AG04449 (cell line): ENCODE measurements at regions of chr7 and their contacts with region 1.

Region 1: DNA sequence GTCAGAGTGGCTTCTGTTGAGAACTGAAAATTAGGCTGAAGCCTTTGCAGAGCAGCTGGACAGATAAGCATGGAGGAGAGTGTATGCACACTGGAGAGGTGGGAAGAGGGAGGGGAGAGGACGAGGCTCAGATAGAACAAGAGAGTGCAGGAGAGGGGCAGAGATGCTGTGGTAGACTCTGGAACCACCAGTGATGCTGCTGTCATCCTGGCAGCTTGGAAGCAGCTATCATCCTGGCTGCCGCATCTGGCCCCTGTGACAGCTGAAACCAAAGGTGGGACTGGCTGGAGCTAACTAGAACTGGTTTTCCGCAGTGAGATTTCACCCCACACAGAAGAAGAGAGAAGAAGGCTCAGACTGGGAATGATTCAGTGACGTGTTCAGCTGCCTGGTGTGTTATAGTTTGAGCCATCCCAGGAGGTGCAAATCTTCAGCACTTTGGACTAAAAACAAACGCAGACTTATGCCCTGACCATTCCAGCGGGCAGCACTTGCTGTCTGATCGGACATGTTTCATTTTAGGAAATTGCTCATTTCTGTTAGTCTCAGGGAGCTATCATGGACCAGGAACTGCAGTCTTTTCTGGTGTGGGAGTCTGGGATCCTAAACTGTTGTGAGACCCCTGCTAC is 38.4 kb downstream of the EEPD1 start:
- DNase-seq: no peak
- H3K4me3 ChIP-seq: peak overlapping the region; percentile 12; the same call in 1 of the 2 replicates
- CTCF ChIP-seq: no peak

Region 2: DNA sequence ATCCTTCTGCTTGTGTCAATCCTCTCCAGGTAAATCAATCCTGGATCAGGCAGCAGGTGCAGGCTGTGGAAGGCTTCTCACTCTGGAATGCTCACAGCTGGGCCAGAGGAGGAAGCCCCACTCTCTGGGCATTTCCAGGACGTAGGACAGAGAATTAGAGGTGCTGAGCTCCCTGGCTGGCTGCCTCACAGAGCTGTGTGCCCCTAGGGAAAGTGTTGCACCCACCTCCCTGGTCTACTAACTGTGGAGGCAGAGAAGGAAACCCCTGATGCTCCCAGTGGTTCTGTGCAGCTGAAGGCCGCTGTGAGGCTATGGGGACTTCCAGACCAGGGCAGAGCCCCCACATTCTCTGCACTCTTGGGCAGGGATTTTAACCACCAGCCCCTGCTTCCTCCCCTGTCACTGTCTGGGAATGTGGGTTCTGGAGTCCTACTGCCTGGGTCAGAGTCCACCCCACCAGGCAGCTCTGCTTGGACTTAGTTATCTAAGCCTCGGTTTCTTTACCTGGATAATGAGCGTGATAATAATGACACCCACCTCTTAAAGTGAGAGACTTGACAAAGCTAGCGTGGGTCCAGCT is 111.9 kb before region 1 on chr7:
- CTCF ChIA-PET with region 1: no interaction called
- POLR2A ChIA-PET with region 1: no interaction called
- DNase-seq: no peak
- H3K4me3 ChIP-seq: no peak overlapping the region
- CTCF ChIP-seq: no peak

Region 3: GRCh38 chr7:36180121-36180520 is 11.3 kb before region 1 on chr7:
- CTCF ChIA-PET with region 1: interaction called, 11 read pairs
- POLR2A ChIA-PET with region 1: no interaction called
- DNase-seq: no peak
- H3K4me3 ChIP-seq: no peak overlapping the region
- CTCF ChIP-seq: no peak